CD4-positive, alpha-beta memory T cell (primary cell): ENCODE measurements at regions of chr5 and their contacts with region 1.

Region 1: DNA sequence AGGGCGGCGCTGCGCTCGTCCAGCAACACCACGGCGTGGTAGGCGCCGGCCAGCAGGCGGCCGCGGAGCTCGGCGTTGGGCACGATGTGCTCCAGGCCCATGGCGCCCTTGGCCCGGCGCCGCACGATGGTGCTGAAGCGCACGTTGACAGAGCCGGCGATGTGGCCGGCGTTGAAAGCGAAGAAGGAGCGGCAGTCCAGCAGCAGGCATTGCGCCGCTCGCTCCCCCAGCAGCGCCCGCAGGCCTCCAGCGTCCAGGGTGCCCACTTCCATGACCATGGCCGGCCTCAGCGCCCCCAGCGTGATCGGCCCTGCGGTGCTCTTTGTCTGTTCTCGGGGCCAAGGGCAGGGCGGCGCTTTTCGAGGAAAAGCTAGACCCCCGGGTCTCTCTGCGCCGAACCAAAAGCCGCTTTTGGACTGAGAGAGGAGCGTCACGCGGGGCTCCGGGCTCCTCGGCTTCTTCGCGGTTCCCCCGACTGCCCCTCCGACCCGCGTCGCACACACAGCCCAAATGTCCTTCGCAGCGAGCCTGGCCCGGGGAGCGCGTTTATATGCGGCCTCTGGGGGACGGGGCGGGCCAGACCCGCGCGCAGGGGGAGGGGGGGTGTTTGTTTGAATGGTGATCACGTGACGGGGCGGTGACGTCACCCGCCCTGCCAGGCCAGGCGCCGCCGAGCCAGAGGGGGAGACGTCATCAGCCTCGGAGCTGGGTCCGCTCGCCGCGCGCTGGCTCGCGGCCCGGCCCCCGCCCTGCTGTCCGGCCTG is at the start of gene DUSP1:
- DNase-seq: peak; percentile 97 to 98 (median 98)
- H3K4me3 ChIP-seq: peak within 1 kb of the TSS; percentile 83 to 92
- H3K4me3 Mint-ChIP-seq: peak within 1 kb of the TSS; percentile 93 to 98 (median 96)
- H3K27ac ChIP-seq: peak within 1 kb of the TSS; percentile 100
- H3K27ac Mint-ChIP-seq: peak within 1 kb of the TSS; percentile 99 to 100 (median 100)
- H3K4me1 ChIP-seq: peaks cover 64% of the 10 kb centered on the region
- H3K4me1 Mint-ChIP-seq: peaks cover 47 to 89% (median 60%) of the 10 kb centered on the region in 4 donors
- H3K27me3 ChIP-seq: no peaks in the 10 kb centered on the region
- H3K27me3 Mint-ChIP-seq: peaks cover 0 to 3% of the 10 kb centered on the region in 2 donors
- total RNA-seq, gene DUSP1: 18.0 to 18.8 TPM

Region 2: DNA sequence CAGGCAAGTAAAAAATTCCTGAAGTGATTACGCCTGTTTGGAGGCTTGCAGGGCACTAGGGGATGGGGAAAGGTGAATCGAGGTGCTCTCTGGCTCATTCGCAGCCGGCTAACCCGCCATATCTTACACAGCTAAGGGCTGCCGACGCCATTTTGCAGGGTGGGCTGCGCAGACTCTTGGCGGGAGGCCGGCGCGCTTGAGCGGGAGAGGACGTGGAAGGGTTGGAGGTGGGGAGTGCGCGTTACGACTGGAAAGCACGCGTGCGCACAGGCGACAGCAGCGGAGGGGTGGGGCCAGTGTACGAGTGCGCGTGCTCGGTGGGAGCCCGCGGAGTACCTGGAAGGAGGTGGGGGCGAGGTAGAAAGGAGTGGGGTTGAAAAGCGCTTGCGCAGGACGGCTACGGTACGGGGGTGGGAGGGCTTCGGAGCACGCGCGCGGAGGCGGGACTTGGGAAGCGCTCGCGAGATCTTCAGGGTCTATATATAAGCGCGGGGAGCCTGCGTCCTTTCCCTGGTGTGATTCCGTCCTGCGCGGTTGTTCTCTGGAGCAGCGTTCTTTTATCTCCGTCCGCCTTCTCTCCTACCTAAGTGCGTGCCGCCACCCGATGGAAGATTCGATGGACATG is 1383.4 kb before region 1 on chr5 and contains the start of gene NPM1:
- CTCF ChIA-PET with region 1: interaction called, 3 read pairs
- POLR2A ChIA-PET with region 1: interaction called, 3 read pairs
- intact Hi-C with region 1: loop called (anchors 5 kb)
- DNase-seq: peak; percentile 97 to 99 (median 99)
- H3K4me3 ChIP-seq: peak within 1 kb of the TSS; percentile 74 to 94
- H3K4me3 Mint-ChIP-seq: peak within 1 kb of the TSS; percentile 97 to 99 (median 98)
- H3K27ac ChIP-seq: peak within 1 kb of the TSS; percentile 79
- H3K27ac Mint-ChIP-seq: peak within 1 kb of the TSS; percentile 95 to 100 (median 99)
- H3K4me1 ChIP-seq: peaks cover 45% of the 10 kb centered on the region
- H3K4me1 Mint-ChIP-seq: peaks cover 29 to 58% (median 43%) of the 10 kb centered on the region in 4 donors
- H3K27me3 ChIP-seq: no peaks in the 10 kb centered on the region
- H3K27me3 Mint-ChIP-seq: peaks cover 0 to 3% of the 10 kb centered on the region in 2 donors
- total RNA-seq, gene NPM1: 857 to 892 TPM

Region 3: DNA sequence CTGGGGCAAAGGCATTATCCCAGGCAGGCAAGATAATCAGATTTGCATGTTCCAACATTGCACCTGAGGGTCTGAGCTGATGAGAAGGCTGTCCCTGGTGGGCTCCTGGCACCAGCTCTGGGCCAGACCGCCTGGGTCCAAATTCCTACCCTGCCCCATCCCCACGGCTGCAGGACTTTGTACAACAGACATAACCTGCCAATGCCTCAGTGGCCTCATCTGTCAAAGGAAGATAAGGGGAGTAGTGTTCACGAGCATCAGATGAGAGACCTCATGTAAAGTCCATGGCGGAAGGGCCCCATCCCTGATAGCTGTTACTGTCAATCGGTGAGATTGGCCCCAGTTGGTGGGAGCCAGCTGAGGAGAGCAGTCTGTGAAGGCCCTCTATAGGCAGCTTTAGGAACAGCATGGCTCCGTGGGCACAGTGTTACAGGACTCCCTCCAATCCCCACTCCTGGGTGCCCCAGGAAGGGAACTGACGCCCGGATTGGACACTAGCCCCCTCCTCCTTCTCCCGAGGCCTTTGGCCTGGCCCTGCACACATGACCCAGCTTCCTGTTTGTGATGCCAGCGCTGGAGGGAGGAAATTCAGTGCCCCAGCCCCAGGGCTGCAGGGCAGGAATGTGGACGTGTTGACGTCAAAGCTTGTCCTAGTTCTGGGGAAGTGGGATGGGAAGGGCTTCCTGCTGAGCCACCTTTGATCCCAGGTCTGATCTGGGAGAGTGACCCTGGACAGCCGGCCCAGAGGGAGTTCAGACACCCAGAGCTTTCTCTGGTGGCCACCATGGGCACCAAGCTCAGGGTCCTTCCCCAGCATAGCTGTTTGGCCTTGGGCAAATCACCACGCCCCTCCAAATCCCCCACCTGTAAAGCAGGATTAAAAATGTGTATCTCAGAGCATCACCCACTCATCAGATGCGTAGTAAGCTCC is 56.1 kb before region 1 on chr5:
- CTCF ChIA-PET with region 1: interaction called, 68 read pairs
- POLR2A ChIA-PET with region 1: interaction called, 97 read pairs
- intact Hi-C with region 1: loop called (anchors 1 kb)
- DNase-seq: peak; percentile 58 to 69 (median 61)
- H3K4me3 ChIP-seq: no peak overlapping the region
- H3K4me3 Mint-ChIP-seq: no peak overlapping the region
- H3K27ac ChIP-seq: no peak overlapping the region
- H3K27ac Mint-ChIP-seq: peak overlapping the region in 5 of 7 donors; percentile 0 to 62 (median 41)
- H3K4me1 ChIP-seq: peaks cover 11% of the 10 kb centered on the region
- H3K4me1 Mint-ChIP-seq: peaks cover 15 to 22% (median 17%) of the 10 kb centered on the region in 4 donors
- H3K27me3 ChIP-seq: no peaks in the 10 kb centered on the region
- H3K27me3 Mint-ChIP-seq: peaks cover 9 to 13% of the 10 kb centered on the region in 2 donors

Region 4: DNA sequence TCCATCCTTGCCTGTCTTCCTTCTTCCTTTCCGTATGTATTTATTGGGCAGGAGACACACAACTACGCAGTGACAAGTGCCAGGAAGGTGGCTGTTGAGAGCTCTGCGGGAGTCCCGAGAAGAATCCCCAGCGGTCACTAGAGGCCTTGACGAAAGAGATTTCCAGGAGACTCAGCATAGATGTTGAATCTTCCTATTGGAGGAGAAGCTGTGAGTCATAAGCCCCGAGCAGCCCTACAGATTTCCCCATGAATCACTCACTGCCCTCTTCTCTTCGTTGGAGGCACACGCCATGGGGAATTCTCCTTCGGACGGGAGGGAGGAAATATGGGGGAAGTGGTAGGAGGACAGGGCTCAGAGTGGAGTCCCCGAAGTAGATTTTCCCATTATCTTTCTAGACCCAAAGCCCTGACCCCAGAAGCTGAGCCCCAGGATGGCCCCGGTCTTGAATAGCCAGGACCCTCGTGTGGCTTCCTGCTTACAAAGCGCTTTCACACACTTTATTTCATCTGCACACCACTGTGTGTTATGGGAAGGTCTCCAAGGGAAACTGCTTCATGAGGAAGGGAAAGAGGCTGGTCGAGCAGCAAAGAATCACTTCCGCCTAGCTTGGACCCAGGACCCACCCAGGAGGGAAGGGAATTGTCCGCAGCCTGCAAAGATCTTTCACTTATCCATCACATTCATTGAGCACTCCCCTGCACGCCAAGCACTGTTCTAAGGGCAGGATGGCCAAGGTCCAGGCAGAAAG is 12.6 kb before region 1 on chr5:
- CTCF ChIA-PET with region 1: interaction called, 10 read pairs
- POLR2A ChIA-PET with region 1: interaction called, 56 read pairs
- intact Hi-C with region 1: no loop called
- DNase-seq: no peak
- H3K4me3 ChIP-seq: no peak overlapping the region
- H3K4me3 Mint-ChIP-seq: peak overlapping the region in 1 of 8 donors; percentile 1
- H3K27ac ChIP-seq: no peak overlapping the region
- H3K27ac Mint-ChIP-seq: peak overlapping the region in 4 of 7 donors; percentile 28 to 74 (median 32)
- H3K4me1 ChIP-seq: no peaks in the 10 kb centered on the region
- H3K4me1 Mint-ChIP-seq: peaks cover 2 to 6% (median 4%) of the 10 kb centered on the region in 4 donors
- H3K27me3 ChIP-seq: no peaks in the 10 kb centered on the region
- H3K27me3 Mint-ChIP-seq: no peaks in the 10 kb centered on the region

Region 5: DNA sequence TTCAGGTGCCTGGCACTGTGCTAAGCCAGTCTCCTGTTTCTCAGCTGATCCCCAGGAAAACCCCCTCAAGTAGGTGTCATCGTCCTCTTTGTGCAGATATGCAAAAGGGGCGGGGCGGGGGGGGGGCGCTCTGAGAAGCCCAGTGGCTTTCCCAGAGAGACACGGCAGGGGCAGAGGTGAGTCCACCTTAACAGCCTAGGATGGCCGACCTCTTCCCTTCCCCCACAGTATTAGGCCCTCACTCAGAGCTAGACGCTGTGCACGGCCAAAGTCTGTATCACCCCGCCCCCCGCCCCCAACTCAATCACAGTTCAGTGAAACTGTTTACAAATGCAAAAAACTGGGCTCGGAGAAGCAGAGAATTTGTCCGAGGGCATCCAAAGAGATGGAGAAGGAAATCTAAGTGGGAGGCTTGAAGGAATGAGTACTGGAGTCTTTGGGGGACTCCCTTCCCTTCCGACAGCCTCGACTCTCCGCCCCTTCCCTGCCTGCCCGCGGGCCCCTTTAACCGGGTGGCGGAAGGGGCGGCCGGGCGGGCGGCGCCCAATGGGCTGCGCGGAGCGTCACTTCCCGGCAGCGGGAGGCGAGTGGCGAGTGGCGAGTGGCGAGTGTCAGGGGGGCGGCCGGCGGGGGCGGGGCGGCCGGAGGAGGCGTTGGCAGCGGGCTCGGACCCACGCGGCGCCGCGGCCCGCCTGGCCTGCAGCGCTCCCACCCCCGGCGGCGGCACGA is 63.0 kb after region 1 on chr5 and contains the start of gene ERGIC1:
- CTCF ChIA-PET with region 1: interaction called, 22 read pairs
- POLR2A ChIA-PET with region 1: interaction called, 114 read pairs
- intact Hi-C with region 1: loop called (anchors 1 kb)
- DNase-seq: peak; percentile 59 to 73 (median 63)
- H3K4me3 ChIP-seq: peak within 1 kb of the TSS; percentile 63 to 69
- H3K4me3 Mint-ChIP-seq: peak within 1 kb of the TSS; percentile 90 to 96 (median 92)
- H3K27ac ChIP-seq: peak within 1 kb of the TSS; percentile 82
- H3K27ac Mint-ChIP-seq: peak within 1 kb of the TSS; percentile 89 to 97 (median 93)
- H3K4me1 ChIP-seq: peaks cover 47% of the 10 kb centered on the region
- H3K4me1 Mint-ChIP-seq: peaks cover 25 to 52% (median 36%) of the 10 kb centered on the region in 4 donors
- H3K27me3 ChIP-seq: no peaks in the 10 kb centered on the region
- H3K27me3 Mint-ChIP-seq: no peaks in the 10 kb centered on the region
- total RNA-seq, gene ERGIC1: 45.8 to 51.0 TPM

Region 6: DNA sequence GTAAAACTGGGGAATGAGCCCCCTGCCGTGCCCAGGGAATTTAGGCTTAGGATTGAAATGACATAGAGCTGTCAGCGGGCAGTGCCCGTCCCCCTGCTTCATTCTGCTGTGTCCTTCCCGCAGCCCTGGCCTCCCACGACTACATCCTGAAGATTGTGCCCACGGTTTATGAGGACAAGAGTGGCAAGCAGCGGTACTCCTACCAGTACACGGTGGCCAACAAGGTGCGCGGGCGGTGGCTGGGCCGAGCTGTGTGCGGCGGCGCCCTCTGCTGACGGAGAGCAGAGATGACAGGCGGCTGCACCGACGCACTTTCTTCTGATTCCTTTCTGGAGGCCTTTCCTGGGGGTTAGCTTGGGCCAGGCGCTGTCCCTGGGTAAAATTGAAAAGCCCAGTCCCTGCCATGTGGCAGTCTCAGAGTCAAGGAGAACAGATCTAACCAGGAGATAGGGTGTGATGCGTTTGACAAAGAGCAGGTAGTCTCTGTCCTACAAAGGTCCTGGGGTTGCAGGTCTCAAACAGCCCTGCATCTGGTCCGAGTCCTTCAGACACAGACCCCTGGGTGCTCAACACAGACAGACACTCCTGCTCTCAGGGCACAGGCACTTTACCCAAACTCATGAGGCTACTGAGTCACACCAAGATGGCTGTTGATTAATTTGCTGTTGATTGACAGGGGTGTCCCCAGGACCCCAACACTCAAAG is 161.6 kb after region 1 on chr5:
- CTCF ChIA-PET with region 1: interaction called, 63 read pairs
- POLR2A ChIA-PET with region 1: interaction called, 44 read pairs
- intact Hi-C with region 1: loop called (anchors 1 kb)
- DNase-seq: peak; percentile 64 to 74 (median 70)
- H3K4me3 ChIP-seq: no peak overlapping the region
- H3K4me3 Mint-ChIP-seq: no peak overlapping the region
- H3K27ac ChIP-seq: no peak overlapping the region
- H3K27ac Mint-ChIP-seq: peak overlapping the region in 5 of 7 donors; percentile 54 to 80 (median 66)
- H3K4me1 ChIP-seq: peaks cover 4% of the 10 kb centered on the region
- H3K4me1 Mint-ChIP-seq: peaks cover 6 to 8% (median 6%) of the 10 kb centered on the region in 4 donors
- H3K27me3 ChIP-seq: no peaks in the 10 kb centered on the region
- H3K27me3 Mint-ChIP-seq: no peaks in the 10 kb centered on the region

Region 7: DNA sequence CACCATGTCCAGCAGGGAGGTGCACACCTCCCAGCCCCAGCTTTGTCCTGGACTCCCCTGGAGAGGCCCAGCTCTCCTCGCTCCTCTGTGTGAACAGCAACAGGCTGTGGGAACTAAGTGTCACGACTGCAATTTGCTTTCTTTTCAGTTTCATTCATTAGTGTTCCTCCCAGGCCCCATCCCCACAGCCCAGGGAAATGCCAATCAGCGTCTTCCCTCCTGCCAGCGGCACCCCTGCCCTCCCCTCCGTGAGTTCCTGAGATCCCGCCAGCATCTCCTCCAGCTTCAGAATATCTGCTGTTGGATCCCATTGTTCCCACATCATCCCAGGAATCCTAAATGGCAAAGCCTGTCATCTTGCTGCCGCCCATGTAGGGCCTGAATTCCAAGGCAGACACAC is 175.3 kb after region 1 on chr5:
- CTCF ChIA-PET with region 1: no interaction called
- POLR2A ChIA-PET with region 1: no interaction called
- intact Hi-C with region 1: no loop called
- DNase-seq: no peak
- H3K4me3 ChIP-seq: no peak overlapping the region
- H3K4me3 Mint-ChIP-seq: no peak overlapping the region
- H3K27ac ChIP-seq: no peak overlapping the region
- H3K27ac Mint-ChIP-seq: peak overlapping the region in 1 of 7 donors; percentile 41
- H3K4me1 ChIP-seq: no peaks in the 10 kb centered on the region
- H3K4me1 Mint-ChIP-seq: no peaks in the 10 kb centered on the region
- H3K27me3 ChIP-seq: no peaks in the 10 kb centered on the region
- H3K27me3 Mint-ChIP-seq: no peaks in the 10 kb centered on the region

Region 8: GRCh38 chr5:173057062-173057924 is 286.4 kb after region 1 on chr5:
- CTCF ChIA-PET with region 1: interaction called, 3 read pairs
- POLR2A ChIA-PET with region 1: interaction called, 16 read pairs
- intact Hi-C with region 1: loop called (anchors 2 kb)
- DNase-seq: peak; percentile 97 to 99 (median 98)
- H3K4me3 ChIP-seq: peak overlapping the region; percentile 68 to 71
- H3K4me3 Mint-ChIP-seq: peak overlapping the region; percentile 92 to 98 (median 95)
- H3K27ac ChIP-seq: peak overlapping the region; percentile 95
- H3K27ac Mint-ChIP-seq: peak overlapping the region; percentile 90 to 96 (median 96)
- H3K4me1 ChIP-seq: peaks cover 50% of the 10 kb centered on the region
- H3K4me1 Mint-ChIP-seq: peaks cover 26 to 68% (median 47%) of the 10 kb centered on the region in 4 donors
- H3K27me3 ChIP-seq: no peaks in the 10 kb centered on the region
- H3K27me3 Mint-ChIP-seq: no peaks in the 10 kb centered on the region

Region 9: GRCh38 chr5:173567574-173567973 is 796.7 kb after region 1 on chr5:
- CTCF ChIA-PET with region 1: no interaction called
- POLR2A ChIA-PET with region 1: no interaction called
- intact Hi-C with region 1: no loop called
- DNase-seq: no peak
- H3K4me3 ChIP-seq: no peak overlapping the region
- H3K4me3 Mint-ChIP-seq: no peak overlapping the region
- H3K27ac ChIP-seq: no peak overlapping the region
- H3K27ac Mint-ChIP-seq: no peak overlapping the region
- H3K4me1 ChIP-seq: no peaks in the 10 kb centered on the region
- H3K4me1 Mint-ChIP-seq: peaks cover 0 to 3% (median 1%) of the 10 kb centered on the region in 4 donors
- H3K27me3 ChIP-seq: peaks cover under 1% of the 10 kb centered on the region
- H3K27me3 Mint-ChIP-seq: peaks cover 9 to 22% of the 10 kb centered on the region in 2 donors